ENCODE measurements at regions of chr9 and their contacts with region 1.

Region 1: GRCh38 chr9:113886466-113886865 is 10.4 kb downstream of the ZNF618 start:
- DNase-seq: no peak
- ATAC-seq: peak in 2 of 4 donors; percentile 26 to 37
- H3K4me3 ChIP-seq: peak overlapping the region in 10 of 12 donors; percentile 17 to 51 (median 38)
- H3K27ac ChIP-seq: peak overlapping the region in 7 of 12 donors; percentile 30 to 59 (median 43)
- H3K4me1 ChIP-seq: peaks cover 0 to 38% (median 7%) of the 10 kb centered on the region in 12 donors
- H3K27me3 ChIP-seq: no peaks in the 10 kb centered on the region
- CTCF ChIP-seq: no peak
- POLR2A ChIP-seq: no peak

Region 2: DNA sequence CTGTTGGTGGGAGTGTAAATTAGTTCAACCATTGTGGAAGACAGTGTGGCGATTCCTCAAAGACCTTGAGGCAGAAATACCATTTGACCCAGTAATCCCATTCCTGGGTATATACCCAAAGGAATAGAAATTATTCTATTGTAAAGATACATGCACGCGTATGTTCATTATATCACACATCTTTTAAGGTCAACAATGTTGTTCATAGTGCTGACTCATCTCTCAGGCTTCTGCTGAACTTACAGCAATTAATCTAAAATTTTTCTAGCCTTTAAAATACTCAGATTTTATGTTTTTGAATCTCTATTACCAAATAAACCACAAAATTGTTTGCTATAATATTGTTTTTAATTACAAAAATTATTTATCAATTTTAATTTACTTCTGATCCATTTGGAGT is 49.1 kb before region 1 on chr9:
- intact Hi-C with region 1: no loop called
- DNase-seq: no peak
- ATAC-seq: no peak
- H3K4me3 ChIP-seq: no peak overlapping the region
- H3K27ac ChIP-seq: no peak overlapping the region
- H3K4me1 ChIP-seq: no peaks in the 10 kb centered on the region
- H3K27me3 ChIP-seq: no peaks in the 10 kb centered on the region
- CTCF ChIP-seq: no peak
- POLR2A ChIP-seq: no peak

Region 3: DNA sequence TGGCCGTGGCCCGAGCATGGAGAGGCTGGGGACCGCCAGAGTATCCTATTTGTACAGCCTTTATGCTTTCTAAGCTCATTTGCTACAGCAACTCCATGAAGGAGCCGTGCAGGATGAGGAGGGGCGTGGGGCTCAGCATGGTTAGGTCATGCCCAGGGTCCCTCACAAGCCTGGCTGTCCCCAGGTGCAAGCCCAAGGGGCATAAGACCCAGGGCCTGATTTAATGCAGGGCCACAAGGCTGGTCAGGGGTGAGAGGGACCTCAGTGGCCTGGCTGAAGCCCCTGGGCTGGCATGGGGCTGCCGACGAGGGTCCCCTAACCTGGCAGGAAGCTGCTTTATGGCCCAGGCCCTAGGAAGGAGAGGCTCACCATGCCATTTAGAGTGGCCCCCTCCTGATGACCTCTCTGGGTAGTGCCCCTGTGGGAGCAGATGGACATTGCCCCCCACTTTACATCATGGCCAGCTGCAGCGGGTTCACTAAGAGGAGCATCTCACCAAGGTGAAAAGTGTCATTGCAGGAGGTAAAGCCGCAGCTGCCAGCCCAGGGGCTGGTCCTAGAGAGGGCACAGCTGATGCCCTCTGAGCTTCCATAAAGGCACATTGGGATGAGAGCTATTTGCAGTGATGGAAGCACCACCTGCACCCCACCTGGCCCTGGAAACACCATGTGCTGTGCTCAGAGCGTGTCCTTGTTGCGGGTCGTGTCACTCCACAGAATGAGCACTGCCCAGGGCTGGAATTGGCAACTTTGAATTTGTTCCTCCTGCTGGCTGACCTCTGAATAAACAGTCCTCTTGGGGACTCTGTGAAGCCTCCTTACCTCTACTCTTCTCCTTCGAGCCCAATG is 48.6 kb after region 1 on chr9:
- intact Hi-C with region 1: loop called in 1 of 10 experiments (anchors 5 kb)
- DNase-seq: no peak
- ATAC-seq: peak in 1 of 4 donors; percentile 24
- H3K4me3 ChIP-seq: no peak overlapping the region
- H3K27ac ChIP-seq: no peak overlapping the region
- H3K4me1 ChIP-seq: peaks cover 0 to 17% (median 2%) of the 10 kb centered on the region in 12 donors
- H3K27me3 ChIP-seq: no peaks in the 10 kb centered on the region
- CTCF ChIP-seq: no peak
- POLR2A ChIP-seq: no peak

Region 4: DNA sequence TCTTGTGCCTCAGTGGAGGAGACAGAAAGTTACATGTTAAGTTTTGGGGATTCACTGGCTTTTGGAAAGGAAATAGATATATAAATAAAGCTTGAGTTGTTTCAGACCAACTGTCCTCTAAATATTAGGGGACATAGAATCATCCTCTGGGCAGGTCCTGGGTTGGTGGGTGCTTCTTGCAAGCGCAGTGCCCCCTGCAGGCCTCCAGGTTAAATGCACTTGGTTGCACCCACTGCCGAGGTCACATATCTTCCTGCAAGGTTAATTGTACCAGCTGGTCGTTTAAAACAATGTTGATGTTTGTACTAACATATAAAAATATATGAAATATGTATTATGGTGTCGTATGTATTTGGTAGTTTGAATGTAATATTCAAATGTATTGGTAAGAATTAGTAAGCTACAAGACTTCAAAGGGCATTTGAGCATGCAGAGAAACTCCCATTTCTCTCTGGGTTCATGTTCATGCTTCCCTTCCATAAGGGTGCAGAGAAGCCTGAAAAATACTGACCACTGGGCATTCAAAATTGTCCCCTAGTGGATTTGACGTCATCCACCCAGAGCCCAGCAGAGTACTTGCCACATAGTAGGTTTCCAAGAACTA is 76.7 kb after region 1 on chr9:
- intact Hi-C with region 1: loop called in 1 of 10 experiments (anchors 10 kb)
- DNase-seq: peak in 1 of 5 donors; percentile 26
- ATAC-seq: no peak
- H3K4me3 ChIP-seq: no peak overlapping the region
- H3K27ac ChIP-seq: no peak overlapping the region
- H3K4me1 ChIP-seq: peaks cover 0 to 4% (median 0%) of the 10 kb centered on the region in 12 donors
- H3K27me3 ChIP-seq: no peaks in the 10 kb centered on the region
- CTCF ChIP-seq: peak; percentile 23 to 72 (median 56)
- POLR2A ChIP-seq: no peak

Region 5: GRCh38 chr9:114059047-114059803 is 172.8 kb after region 1 on chr9:
- intact Hi-C with region 1: no loop called
- DNase-seq: peak; percentile 38 to 79 (median 55)
- ATAC-seq: peak; percentile 47 to 84 (median 60)
- H3K4me3 ChIP-seq: no peak overlapping the region
- H3K27ac ChIP-seq: no peak overlapping the region
- H3K4me1 ChIP-seq: peaks cover 0 to 17% (median 5%) of the 10 kb centered on the region in 12 donors
- H3K27me3 ChIP-seq: peaks cover 0 to 5% (median 0%) of the 10 kb centered on the region in 9 donors
- CTCF ChIP-seq: no peak
- POLR2A ChIP-seq: no peak